HCT116 (cell line): ENCODE measurements at regions of chrX and their contacts with region 1.

Region 1: DNA sequence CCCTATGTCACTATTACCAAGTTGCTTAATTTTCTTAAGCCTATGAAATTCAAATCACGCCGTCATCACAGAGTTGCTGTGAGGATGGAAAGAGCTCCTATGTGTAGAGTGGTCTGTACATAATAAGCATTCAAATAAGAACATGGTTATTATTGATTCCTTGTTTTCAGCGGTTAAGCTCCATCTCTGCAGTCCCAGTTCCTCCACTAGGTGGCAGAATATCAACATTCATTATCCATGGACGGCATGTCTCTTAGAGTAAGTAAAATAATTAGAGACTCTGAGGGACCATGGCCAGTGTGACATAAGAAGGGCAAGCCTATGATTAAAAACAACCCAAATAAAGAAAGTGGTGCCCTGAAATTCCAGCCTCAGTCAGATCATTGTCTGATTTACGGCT is 132.5 kb upstream of the NHS start:
- DNase-seq: peak; percentile 34
- ATAC-seq: peak; percentile 79
- H3K4me3 ChIP-seq: no peak overlapping the region
- H3K27ac ChIP-seq: no peak overlapping the region
- H3K4me1 ChIP-seq: no peaks in the 10 kb centered on the region
- H3K27me3 ChIP-seq: no peaks in the 10 kb centered on the region
- CTCF ChIP-seq: peak; percentile 61 to 73 (median 67)
- POLR2A ChIP-seq: no peak
- RAD21 ChIP-seq: peak; percentile 74

Region 2: DNA sequence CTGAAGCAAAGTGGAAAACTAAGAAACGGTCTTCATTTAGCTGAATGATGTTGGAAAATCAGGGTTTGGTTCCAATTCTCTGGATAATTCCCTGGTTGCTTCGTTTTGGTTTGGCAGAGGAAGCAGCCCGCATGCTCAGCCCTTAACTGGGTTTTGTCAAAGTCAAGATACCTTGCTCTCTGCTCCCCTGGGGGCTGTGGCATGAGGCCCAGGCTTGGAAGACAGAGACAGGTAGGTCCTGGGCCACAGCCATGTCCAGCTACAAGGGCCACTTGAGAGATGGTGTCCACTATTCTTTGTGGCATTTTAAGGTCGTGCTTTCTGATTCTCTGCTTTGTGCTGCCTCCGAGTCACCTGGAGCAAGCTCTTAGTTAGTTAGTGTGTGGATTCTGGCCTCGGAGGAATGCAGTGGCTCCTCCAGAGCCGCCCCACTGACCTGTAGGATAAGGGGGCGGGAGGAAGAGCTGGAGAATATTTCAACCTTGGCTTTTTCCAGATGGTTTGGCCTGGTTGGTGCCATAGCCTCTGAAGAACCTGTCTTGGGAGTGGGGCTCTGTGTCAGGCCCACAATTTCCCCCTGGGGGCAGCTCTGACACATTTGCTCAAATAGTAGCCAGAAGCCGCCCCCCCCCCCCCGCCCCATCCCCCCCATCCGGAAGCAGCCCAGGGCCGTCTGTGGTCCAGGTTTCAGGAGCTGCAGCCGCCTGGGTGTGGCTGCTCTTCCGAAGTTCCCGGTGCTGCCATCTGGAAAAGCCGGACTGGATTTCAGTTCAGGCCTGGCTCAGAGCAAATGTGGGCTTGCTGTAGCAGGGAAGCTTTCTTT is 279.6 kb after region 1 on chrX:
- CTCF ChIA-PET with region 1: no interaction called
- POLR2A ChIA-PET with region 1: no interaction called
- RAD21 ChIA-PET with region 1: no interaction called
- intact Hi-C with region 1: loop called (anchors 5 kb)
- DNase-seq: peak; percentile 16
- ATAC-seq: peak; percentile 87
- H3K4me3 ChIP-seq: peak overlapping the region in 1 of 2 experiments; percentile 13; a peak in 1 of 4 replicates
- H3K27ac ChIP-seq: no peak overlapping the region
- H3K4me1 ChIP-seq: peaks cover 10 to 11% of the 10 kb centered on the region in 2 experiments; a peak in 3 of 4 replicates
- H3K27me3 ChIP-seq: no peaks in the 10 kb centered on the region
- CTCF ChIP-seq: no peak
- POLR2A ChIP-seq: no peak
- RAD21 ChIP-seq: no peak; the same call in 1 of the 2 replicates

Region 3: DNA sequence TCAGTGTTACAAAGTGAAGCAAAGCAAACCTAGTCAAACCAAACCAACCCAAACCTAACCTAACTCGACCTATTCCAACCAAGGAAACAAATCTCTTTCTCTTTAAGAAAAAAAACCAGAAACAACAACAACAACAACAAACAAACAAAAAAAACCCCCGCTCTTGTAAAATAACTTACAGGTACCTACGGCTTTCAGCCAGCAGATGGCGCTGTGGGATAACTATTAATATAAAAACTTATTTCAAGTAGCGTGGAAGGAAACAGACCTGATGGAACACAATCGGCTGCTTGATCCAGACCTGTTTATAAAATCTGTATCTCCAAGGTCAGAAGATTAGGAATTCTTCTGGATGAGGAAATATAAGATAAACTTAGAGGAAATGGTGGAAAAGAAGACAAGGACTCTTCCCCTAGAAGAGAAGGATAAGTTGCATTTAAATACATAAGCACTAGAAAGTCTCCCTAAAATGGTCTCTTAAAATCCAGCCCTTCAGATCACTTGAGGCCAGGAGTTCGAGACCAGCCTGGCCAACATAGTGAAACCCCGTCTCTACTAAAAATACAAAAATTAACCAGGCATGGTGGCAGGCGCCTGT is 1148.6 kb after region 1 on chrX:
- CTCF ChIA-PET with region 1: no interaction called
- POLR2A ChIA-PET with region 1: no interaction called
- RAD21 ChIA-PET with region 1: no interaction called
- intact Hi-C with region 1: no loop called
- DNase-seq: peak; percentile 57
- ATAC-seq: peak; percentile 59; the same call in 1 of the 2 replicates
- H3K4me3 ChIP-seq: no peak overlapping the region
- H3K27ac ChIP-seq: no peak overlapping the region
- H3K4me1 ChIP-seq: no peaks in the 10 kb centered on the region
- H3K27me3 ChIP-seq: no peaks in the 10 kb centered on the region
- CTCF ChIP-seq: peak; percentile 30 to 88 (median 58); a peak in 4 of 6 replicates
- POLR2A ChIP-seq: no peak
- RAD21 ChIP-seq: peak; percentile 79